ENCODE measurements at regions of chr1 and their contacts with region 1.

Region 1: DNA sequence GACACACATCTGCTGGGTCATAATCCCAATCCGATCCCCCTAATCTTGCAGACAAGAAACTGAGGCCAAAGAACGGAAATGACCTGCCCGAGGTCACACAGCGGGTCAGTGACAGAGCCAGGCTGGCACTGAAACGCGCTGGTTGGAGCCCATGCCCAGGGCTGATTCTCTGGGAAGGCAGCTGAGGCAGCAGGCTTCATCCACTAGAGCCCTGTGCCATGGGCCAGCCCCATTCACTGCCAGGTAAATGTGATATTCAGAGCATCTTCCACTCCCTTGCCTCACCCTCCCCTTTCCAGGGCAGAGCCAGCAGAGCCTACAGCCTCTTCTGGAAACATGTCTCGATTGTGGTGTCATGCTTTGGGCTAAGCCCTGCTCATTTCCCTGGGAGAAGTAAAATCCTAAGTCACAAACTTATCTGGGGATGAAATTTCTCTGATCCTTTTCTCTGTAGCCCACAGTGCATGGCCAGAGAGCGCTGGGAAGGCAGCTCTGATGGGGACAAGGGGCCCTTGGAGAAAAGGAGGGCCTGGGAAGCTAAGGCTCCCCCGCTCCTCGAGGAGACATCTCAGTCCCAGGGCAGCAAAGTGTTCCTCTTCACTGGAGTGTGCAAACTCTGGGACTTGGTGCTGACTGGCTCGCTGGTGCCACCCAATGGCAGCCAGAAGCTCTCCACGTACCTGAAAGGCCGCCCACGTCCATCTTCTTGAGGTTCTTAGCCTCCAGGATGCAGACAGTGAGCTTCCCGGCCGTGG is 110.4 kb downstream of the SYT2 start:
- DNase-seq: peak; percentile 69
- H3K4me3 ChIP-seq: no peak overlapping the region
- H3K27ac ChIP-seq: no peak overlapping the region
- H3K4me1 ChIP-seq: peaks cover 8% of the 10 kb centered on the region
- H3K27me3 ChIP-seq: no peaks in the 10 kb centered on the region
- CTCF ChIP-seq: peak; percentile 86 to 97

Region 2: DNA sequence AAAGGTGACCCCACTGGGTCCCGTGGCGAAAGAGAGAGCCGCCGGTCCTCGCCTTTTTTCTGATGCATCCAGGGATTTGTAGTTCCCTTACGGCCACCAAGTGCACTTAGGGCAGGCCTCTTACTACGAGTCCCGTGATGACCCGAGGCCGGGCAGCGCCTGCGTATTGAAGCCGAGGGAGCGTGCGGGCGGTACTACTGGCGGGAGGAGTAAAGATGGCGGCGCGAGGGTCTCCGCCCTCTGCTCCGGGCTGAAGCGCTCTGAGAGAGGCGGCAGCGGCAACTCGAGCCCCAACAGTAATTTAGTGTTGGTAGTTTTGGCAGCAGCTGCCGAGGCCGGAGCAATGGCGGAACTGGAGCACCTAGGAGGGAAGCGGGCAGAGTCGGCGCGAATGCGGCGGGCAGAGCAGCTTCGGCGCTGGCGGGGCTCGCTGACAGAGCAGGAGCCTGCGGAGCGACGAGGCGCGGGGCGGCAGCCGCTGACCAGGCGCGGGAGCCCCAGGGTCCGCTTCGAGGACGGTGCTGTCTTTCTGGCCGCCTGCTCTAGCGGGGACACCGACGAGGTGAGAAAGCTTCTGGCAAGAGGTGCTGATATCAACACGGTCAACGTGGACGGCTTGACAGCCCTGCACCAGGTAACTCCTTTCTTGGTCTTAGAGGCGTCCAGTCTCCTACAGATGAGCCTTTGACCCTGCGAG is 251.2 kb before region 1 on chr1 and contains the start of gene PPP1R12B:
- CTCF ChIA-PET with region 1: no interaction called
- dilution Hi-C with region 1: no loop called
- in situ Hi-C with region 1: loop called in 1 of 2 experiments (anchors 25 kb)
- intact Hi-C with region 1: loop called (anchors 10 kb)
- DNase-seq: peak; percentile 98
- H3K4me3 ChIP-seq: peak within 1 kb of the TSS; percentile 95 to 97 (median 97)
- H3K27ac ChIP-seq: peak within 1 kb of the TSS; percentile 84
- H3K4me1 ChIP-seq: peaks cover 8% of the 10 kb centered on the region
- H3K27me3 ChIP-seq: no peaks in the 10 kb centered on the region
- CTCF ChIP-seq: no peak
- total RNA-seq, gene PPP1R12B: 13.5 to 42.0 TPM

Region 3: GRCh38 chr1:202365092-202365815 is 234.6 kb before region 1 on chr1:
- CTCF ChIA-PET with region 1: no interaction called
- dilution Hi-C with region 1: no loop called
- in situ Hi-C with region 1: no loop called
- intact Hi-C with region 1: no loop called
- DNase-seq: peak; percentile 40
- H3K4me3 ChIP-seq: no peak overlapping the region
- H3K27ac ChIP-seq: no peak overlapping the region
- H3K4me1 ChIP-seq: peaks cover 7% of the 10 kb centered on the region
- H3K27me3 ChIP-seq: no peaks in the 10 kb centered on the region
- CTCF ChIP-seq: no peak

Region 4: DNA sequence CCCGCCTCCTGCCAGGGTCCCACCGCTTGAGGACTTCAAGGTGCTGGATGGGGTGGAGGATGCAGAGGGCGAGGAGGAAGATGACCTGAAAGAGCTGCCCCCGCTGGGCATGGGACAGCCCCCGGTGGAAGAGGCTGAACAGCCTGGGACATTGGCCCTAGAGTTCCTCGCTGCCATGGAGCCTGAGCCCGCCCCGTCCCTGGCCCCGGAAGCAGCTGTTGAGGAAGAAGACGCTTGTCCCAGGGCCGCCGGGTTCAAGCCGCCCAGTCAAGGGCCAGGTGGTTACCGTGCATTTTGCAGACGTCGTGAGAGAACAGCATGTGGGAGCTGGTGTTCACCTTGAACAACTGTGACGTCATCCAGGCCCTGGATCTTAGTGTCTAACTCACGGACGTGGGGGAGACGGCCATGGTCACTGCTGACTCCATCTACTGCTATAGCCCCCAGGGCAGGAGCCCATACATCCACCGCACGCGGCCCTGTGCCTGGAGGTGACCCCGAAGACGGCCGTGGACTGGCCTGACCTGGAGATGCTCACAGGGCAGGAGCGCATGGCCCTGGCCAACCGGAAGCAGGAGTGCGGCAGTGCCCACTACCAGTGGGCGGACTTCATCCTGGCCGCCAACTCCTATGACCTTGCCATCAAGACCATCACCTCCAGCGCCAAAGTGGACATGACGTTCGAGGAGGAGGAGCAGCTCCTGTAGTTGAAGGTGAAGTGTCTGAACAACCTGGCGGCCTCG is 161.3 kb before region 1 on chr1:
- CTCF ChIA-PET with region 1: no interaction called
- dilution Hi-C with region 1: no loop called
- in situ Hi-C with region 1: no loop called
- intact Hi-C with region 1: no loop called
- DNase-seq: no peak
- H3K4me3 ChIP-seq: no peak overlapping the region
- H3K27ac ChIP-seq: no peak overlapping the region
- H3K4me1 ChIP-seq: no peaks in the 10 kb centered on the region
- H3K27me3 ChIP-seq: no peaks in the 10 kb centered on the region
- CTCF ChIP-seq: no peak

Region 5: DNA sequence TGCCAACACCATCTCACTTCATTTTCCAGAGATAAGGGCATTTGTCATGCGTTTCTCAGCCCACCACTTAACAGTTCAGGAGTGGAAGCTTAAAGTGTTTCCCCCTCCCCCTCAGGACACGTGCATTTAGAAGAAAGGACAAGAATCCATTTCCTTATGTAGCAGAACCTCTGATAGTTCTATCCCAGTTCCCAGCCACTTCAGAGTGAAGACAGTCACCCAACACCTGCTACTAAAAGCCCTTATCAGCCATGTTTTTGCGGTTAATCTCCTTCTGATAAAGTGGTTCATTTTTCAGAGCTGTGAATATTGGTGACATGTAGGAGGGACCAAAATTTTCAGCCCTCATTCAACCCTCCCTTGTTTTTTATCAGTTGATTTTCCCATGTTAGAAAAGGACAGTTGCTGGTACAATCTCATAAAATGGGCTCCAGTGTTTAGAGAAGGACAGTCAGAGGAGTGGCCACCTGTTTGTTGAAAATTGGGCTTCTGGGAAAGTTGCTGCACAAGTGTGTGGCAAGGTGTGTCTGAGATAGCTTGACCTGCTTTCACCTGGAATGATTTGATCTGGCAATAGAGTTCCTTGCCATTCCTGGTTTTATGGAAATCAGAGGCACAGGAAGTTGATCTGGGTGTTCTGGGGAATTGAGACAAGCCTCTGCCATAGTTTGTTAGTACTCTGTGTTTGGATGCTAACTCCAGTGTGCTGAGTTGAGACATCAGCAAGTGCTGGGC is 137.3 kb before region 1 on chr1:
- CTCF ChIA-PET with region 1: no interaction called
- dilution Hi-C with region 1: no loop called
- in situ Hi-C with region 1: no loop called
- intact Hi-C with region 1: loop called (anchors 1 kb)
- DNase-seq: no peak
- H3K4me3 ChIP-seq: no peak overlapping the region
- H3K27ac ChIP-seq: no peak overlapping the region
- H3K4me1 ChIP-seq: peaks cover 7% of the 10 kb centered on the region
- H3K27me3 ChIP-seq: no peaks in the 10 kb centered on the region
- CTCF ChIP-seq: no peak

Region 6: DNA sequence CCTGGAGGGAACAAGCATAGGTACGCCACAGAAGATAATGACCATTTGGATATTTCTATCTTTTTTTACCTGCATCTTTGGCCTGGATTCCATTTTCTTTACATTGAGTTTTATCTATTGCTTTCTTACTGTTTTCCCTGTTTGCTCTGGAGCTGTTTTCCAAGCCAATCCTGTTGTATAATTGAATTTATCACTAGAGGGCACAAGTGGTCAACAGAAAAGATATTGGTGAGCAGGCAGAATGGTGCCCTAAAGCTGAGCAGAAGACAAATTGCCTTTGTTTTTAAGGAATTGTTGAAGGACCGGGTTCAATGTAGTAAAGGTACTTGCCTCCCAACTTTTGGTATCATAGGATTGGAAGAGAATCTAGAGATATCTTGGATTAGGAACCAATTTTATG is 98.6 kb before region 1 on chr1:
- CTCF ChIA-PET with region 1: interaction called, 5 read pairs
- dilution Hi-C with region 1: no loop called
- in situ Hi-C with region 1: loop called in 1 of 2 experiments (anchors 10 kb)
- intact Hi-C with region 1: loop called (anchors 1 kb)
- DNase-seq: peak; percentile 25
- H3K4me3 ChIP-seq: no peak overlapping the region
- H3K27ac ChIP-seq: no peak overlapping the region
- H3K4me1 ChIP-seq: peaks cover 8% of the 10 kb centered on the region
- H3K27me3 ChIP-seq: no peaks in the 10 kb centered on the region
- CTCF ChIP-seq: peak; percentile 29 to 49

Region 7: DNA sequence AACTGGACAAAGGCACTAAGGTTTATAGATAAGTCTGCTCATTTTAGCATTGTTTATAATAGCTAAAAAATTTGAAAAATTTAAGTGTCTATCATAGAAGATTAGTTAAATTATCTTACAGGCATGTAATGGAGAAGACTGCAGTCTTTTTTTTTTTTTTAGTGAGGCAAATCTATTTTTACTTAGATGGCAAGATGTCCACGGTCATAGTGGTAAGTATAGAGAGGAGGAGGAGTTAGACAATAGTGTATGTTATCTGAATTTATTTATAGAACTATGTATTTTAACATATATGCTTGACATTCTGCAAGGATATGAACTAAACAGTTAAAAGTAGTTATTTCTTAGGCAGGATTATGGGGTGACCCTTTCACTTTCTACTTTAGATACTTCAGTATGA is 38.6 kb before region 1 on chr1:
- CTCF ChIA-PET with region 1: no interaction called
- dilution Hi-C with region 1: no loop called
- in situ Hi-C with region 1: no loop called
- intact Hi-C with region 1: no loop called
- DNase-seq: no peak
- H3K4me3 ChIP-seq: no peak overlapping the region
- H3K27ac ChIP-seq: no peak overlapping the region
- H3K4me1 ChIP-seq: no peaks in the 10 kb centered on the region
- H3K27me3 ChIP-seq: no peaks in the 10 kb centered on the region
- CTCF ChIP-seq: no peak

Region 8: GRCh38 chr1:202571347-202572339 is 28.2 kb before region 1 on chr1:
- CTCF ChIA-PET with region 1: interaction called, 3 read pairs
- dilution Hi-C with region 1: no loop called
- in situ Hi-C with region 1: no loop called
- intact Hi-C with region 1: loop called (anchors 1 kb)
- DNase-seq: no peak
- H3K4me3 ChIP-seq: no peak overlapping the region
- H3K27ac ChIP-seq: no peak overlapping the region
- H3K4me1 ChIP-seq: peaks cover 36% of the 10 kb centered on the region
- H3K27me3 ChIP-seq: no peaks in the 10 kb centered on the region
- CTCF ChIP-seq: peak; percentile 86 to 95

Region 9: DNA sequence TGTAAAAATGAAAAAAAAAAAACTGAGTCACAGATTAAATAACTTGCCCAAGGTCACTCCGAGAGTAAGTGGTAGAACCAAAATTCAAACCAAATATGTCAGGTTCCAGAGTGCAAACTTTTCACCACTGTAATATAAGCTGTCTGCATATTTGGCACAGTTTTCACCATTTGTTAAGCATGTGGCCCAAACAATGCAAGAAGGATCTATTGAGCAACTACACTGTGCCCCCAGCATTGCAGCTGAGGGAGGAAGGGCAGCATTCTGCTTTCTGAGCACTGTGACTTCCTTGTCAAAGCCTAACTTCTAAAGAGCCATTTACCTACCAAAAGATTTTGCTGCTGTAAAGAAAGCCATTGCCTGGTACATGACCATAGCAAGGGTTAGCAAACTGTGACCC is 23.0 kb before region 1 on chr1:
- CTCF ChIA-PET with region 1: interaction called, 15 read pairs
- dilution Hi-C with region 1: no loop called
- in situ Hi-C with region 1: no loop called
- intact Hi-C with region 1: no loop called
- DNase-seq: no peak
- H3K4me3 ChIP-seq: no peak overlapping the region
- H3K27ac ChIP-seq: peak overlapping the region; percentile 33
- H3K4me1 ChIP-seq: peaks cover 43% of the 10 kb centered on the region
- H3K27me3 ChIP-seq: no peaks in the 10 kb centered on the region
- CTCF ChIP-seq: no peak